Activated T-helper 1 cell treated with anti-CD3 and anti-CD28 coated beads, Interleukin-12 subunit alpha, Interleukin-12 subunit beta, Interleukin-2, Interleukin-4 antibody, amounts not matched to agents 30 ng/mL and 10 ng/mL and 1 ng/mL, durations not matched to agents 14 hours and 24 hours and 36 hours (primary cell): ENCODE measurements at regions of chr16 and their contacts with region 1.

Region 1: GRCh38 chr16:30650369-30651123 is at the start of gene PRR14:
- DNase-seq: peak; percentile 98
- H3K4me3 Mint-ChIP-seq: peak within 1 kb of the TSS; percentile 97
- H3K27ac Mint-ChIP-seq: peak within 1 kb of the TSS; percentile 98
- H3K4me1 Mint-ChIP-seq: peaks cover 25% of the 10 kb centered on the region
- H3K27me3 Mint-ChIP-seq: peaks cover 2% of the 10 kb centered on the region
- total RNA-seq, gene PRR14: 91.9 and 97.4 TPM in 2 replicates

Region 2: GRCh38 chr16:29825145-29826044 is 825.2 kb before region 1 on chr16:
- intact Hi-C with region 1: loop called (anchors 5 kb)
- DNase-seq: peak; percentile 50
- H3K4me3 Mint-ChIP-seq: peak overlapping the region; percentile 68
- H3K27ac Mint-ChIP-seq: peak overlapping the region; percentile 85
- H3K4me1 Mint-ChIP-seq: peaks cover 42% of the 10 kb centered on the region
- H3K27me3 Mint-ChIP-seq: no peaks in the 10 kb centered on the region

Region 3: DNA sequence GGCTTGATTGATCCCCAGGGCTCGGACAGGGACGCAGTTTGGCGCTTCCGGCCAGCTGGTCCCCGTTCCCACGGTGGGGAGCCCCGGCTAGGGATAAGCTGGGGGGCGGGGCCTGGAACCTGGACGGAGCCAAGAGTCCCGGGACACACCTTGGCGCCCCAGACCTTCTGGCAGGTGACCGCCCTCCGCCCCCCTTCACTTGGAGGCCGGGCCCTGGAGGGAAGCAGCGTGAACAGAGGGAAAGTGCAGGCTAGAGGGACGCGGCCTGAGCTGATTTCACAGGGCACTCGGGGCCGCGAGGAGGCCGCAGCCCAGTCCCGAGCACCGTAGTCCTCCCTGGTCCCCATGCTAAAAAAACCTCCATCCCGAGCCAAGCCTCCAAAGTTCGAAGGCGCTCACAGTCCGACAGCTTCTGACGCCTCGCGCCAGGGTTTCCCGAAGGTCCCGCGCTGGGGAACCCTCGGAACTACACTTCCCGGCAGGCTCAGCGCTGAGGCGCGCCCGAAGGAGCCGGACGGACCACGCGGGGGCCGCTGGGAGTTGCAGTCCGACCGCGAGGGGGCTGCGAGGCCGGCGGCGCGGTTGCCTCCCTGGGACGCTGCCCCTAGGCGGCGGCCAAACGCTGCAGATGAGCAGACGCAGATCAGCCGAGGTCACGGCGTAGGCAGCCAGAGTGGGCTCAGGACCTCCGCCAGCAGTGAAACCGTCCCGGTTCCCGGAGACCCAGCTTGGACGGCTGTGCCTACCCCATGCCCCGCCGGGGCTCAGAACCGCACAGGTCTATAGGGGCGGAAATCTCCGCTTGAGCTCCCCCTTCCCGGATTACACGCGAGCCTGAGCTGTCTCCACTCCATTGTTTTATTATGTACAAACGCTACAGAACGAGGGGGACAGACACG is 558.8 kb before region 1 on chr16 and contains the start of gene TBX6:
- intact Hi-C with region 1: loop called (anchors 1 kb)
- DNase-seq: peak; percentile 94
- H3K4me3 Mint-ChIP-seq: peak within 1 kb of the TSS; percentile 88
- H3K27ac Mint-ChIP-seq: peak within 1 kb of the TSS; percentile 90
- H3K4me1 Mint-ChIP-seq: peaks cover 56% of the 10 kb centered on the region
- H3K27me3 Mint-ChIP-seq: no peaks in the 10 kb centered on the region
- total RNA-seq, gene TBX6: 1.6 and 1.8 TPM in 2 replicates

Region 4: DNA sequence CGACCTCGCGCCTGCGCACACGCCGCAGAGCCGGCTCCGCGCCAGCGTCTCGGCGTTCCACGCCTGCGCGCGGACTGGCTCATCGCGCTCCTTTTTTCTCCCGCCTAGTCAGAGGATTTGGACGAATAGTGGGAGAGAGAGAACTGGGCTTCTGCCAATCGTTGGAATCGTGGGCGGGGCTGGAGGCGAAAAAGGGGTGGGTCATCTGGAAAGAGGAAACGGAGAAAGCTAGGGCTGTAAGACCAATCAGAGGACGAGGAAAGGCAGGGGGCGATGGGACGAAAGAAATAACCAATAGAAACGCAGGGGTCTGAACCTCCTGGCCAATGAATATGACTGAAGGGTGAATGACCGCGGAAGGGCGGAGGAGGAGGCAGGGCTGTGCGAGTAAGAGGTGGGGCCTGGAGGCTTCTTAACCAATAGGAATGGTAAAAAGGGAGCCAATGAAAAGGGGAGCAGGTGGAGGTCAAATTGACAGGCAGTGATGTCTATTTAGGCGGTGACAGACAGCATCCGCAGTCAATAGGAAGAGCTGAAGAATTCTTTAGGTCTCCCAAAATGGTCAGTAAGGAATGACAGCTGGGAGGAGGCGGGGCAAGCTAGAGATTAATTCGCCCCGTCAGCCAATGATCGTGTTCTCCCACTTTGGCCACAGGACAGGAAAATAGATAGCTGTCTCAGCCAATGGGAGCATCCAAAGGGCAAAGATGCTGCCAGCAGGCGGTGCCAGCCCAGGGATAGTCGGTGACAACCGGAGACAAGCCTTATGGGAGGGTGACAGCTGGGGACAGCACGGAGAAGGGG is 279.9 kb before region 1 on chr16 and contains the start of gene TBC1D10B:
- intact Hi-C with region 1: loop called (anchors 2 kb)
- DNase-seq: peak; percentile 99
- H3K4me3 Mint-ChIP-seq: peak within 1 kb of the TSS; percentile 94
- H3K27ac Mint-ChIP-seq: peak within 1 kb of the TSS; percentile 89
- H3K4me1 Mint-ChIP-seq: peaks cover 41% of the 10 kb centered on the region
- H3K27me3 Mint-ChIP-seq: no peaks in the 10 kb centered on the region
- total RNA-seq, gene TBC1D10B: 68.9 and 73.6 TPM in 2 replicates

Region 5: GRCh38 chr16:30557957-30558788 is 92.4 kb before region 1 on chr16 and contains the start of gene ZNF764:
- intact Hi-C with region 1: loop called (anchors 2 kb)
- DNase-seq: peak; percentile 97
- H3K4me3 Mint-ChIP-seq: peak within 1 kb of the TSS; percentile 90
- H3K27ac Mint-ChIP-seq: peak within 1 kb of the TSS; percentile 92
- H3K4me1 Mint-ChIP-seq: peaks cover 42% of the 10 kb centered on the region
- H3K27me3 Mint-ChIP-seq: no peaks in the 10 kb centered on the region
- total RNA-seq, gene ZNF764: 17.9 and 21.2 TPM in 2 replicates

Region 6: GRCh38 chr16:30609926-30610839 is 40.4 kb before region 1 on chr16 and contains the start of gene ZNF689:
- intact Hi-C with region 1: loop called (anchors 1 kb)
- DNase-seq: peak; percentile 95
- H3K4me3 Mint-ChIP-seq: peak within 1 kb of the TSS; percentile 93
- H3K27ac Mint-ChIP-seq: peak within 1 kb of the TSS; percentile 96
- H3K4me1 Mint-ChIP-seq: peaks cover 19% of the 10 kb centered on the region
- H3K27me3 Mint-ChIP-seq: no peaks in the 10 kb centered on the region
- total RNA-seq, gene ZNF689: 14.7 TPM in 2 replicates

Region 7: GRCh38 chr16:30628627-30629540 is 21.7 kb before region 1 on chr16:
- intact Hi-C with region 1: loop called (anchors 1 kb)
- DNase-seq: peak; percentile 77
- H3K4me3 Mint-ChIP-seq: peak overlapping the region; percentile 52
- H3K27ac Mint-ChIP-seq: peak overlapping the region; percentile 71
- H3K4me1 Mint-ChIP-seq: peaks cover 10% of the 10 kb centered on the region
- H3K27me3 Mint-ChIP-seq: no peaks in the 10 kb centered on the region